ENCODE measurements at regions of chr16 and their contacts with region 1.

Region 1: GRCh38 chr16:28835867-28836744 is 10.0 kb downstream of the TUFM start:
- DNase-seq: no peak

Region 2: GRCh38 chr16:28846080-28846932 is 10.2 kb after region 1 on chr16 and contains the start of gene TUFM:
- CTCF ChIA-PET with region 1: no interaction called
- POLR2A ChIA-PET with region 1: interaction called, 10 read pairs
- DNase-seq: peak; percentile 96

Region 3: GRCh38 chr16:28869201-28869600 is 33.1 kb after region 1 on chr16:
- CTCF ChIA-PET with region 1: no interaction called
- POLR2A ChIA-PET with region 1: no interaction called
- DNase-seq: no peak

Region 4: DNA sequence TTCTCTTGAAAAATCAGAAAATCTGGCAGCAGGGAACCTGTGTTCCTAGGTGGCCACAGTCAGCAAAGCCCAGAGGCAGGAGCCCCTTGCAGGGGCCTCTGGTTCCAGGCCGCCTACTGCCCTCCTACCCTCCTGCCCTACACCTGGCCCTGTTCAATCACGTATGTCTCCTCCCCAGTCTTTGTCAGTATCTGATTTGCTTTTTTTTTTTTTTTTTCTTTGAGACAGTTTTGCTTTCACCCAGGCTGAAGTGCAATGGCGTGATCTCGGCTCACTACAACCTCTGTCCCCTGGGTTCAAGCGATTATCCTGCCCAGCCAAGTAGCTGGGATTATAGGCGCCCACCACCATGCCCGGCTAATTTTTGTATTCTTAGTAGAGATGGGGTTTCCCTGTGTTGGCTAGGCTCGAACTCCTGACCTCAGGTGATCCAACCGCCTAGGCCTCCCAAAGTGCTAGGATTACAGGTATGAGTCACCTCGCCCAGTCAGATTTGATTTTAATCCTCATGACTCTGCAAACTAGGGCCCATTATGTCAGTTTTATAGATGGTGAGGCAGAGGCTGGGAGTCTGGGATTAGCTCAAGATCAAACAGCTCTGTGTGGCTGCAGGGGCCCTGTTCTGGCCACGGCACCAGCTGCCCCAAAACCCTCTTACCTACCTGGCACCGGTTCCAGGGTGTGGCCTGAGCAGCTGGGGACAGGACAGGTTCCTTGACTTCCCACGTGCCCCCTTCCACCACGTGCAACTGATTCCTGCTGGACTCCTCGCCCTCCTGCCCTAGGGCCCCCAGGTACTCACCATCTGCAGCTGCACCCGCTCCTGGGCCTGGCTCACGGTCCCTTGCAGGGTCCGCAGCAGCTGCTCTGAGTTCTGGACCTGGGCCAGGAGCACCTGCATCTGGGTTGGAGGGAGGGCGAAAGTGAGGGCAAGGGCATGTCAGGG is 74.3 kb after region 1 on chr16:
- CTCF ChIA-PET with region 1: no interaction called
- POLR2A ChIA-PET with region 1: no interaction called
- DNase-seq: no peak

Measured in HEK293T (cell line).